SK-N-SH (cell line): ENCODE measurements at regions of chr13 and their contacts with region 1.

Region 1: DNA sequence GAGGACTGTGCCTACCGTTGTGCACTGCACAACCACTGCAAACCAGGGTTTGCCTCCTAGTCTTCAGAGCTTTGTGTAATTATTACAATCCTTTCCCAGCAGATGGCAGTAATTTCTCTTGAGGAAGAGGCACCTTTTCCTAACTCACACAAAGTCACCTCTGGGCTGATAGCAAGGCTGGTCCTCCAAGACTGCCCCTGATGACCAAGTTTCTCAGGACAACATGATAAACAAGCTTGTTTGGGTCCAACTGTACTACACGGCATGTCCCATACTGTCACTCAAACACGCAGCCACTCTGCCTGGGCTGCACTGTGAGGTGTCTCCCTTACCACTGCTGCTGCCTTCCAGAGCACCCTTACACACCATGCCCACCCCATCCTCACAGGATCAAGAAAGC is 39.3 kb downstream of the RFXAP start:
- DNase-seq: peak; percentile 53
- H3K4me3 ChIP-seq: no peak overlapping the region
- H3K27ac ChIP-seq: no peak overlapping the region
- H3K4me1 ChIP-seq: peaks cover 0 to 8% of the 10 kb centered on the region in 2 experiments; a peak in 1 of 4 replicates
- H3K27me3 ChIP-seq: no peaks in the 10 kb centered on the region
- CTCF ChIP-seq: peak; percentile 66
- EP300 ChIP-seq: no peak
- RAD21 ChIP-seq: peak; percentile 82

Region 2: GRCh38 chr13:35978603-35979316 is 879.5 kb before region 1 on chr13:
- CTCF ChIA-PET with region 1: no interaction called
- POLR2A ChIA-PET with region 1: no interaction called
- DNase-seq: peak; percentile 54
- H3K4me3 ChIP-seq: no peak overlapping the region
- H3K27ac ChIP-seq: peak overlapping the region in 1 of 2 experiments; percentile 80; a peak in 2 of 4 replicates
- H3K4me1 ChIP-seq: peaks cover 0 to 2% of the 10 kb centered on the region in 2 experiments; a peak in 1 of 4 replicates
- H3K27me3 ChIP-seq: no peaks in the 10 kb centered on the region
- CTCF ChIP-seq: peak; percentile 83
- EP300 ChIP-seq: no peak
- RAD21 ChIP-seq: peak; percentile 97

Region 3: DNA sequence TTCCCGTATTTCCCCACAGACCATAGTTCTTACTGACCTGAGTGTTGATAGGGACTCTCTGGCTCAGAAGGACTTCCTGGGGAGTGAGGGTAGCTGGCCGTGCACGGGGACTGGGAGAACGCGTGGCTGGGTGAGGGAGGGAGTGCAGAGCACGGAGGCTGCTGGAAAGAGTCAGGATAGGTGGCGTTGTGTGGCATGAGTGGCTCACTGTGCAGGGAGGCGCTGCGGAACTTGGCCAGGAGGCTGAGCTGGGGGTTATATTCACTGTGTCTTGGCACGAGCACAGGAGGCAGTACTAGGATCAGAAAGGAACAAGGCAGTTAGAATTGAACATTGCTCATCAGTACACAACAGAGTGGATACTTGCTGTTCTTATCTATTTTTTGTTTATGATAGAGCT is 14.3 kb after region 1 on chr13:
- CTCF ChIA-PET with region 1: interaction called, 31 read pairs
- POLR2A ChIA-PET with region 1: no interaction called
- DNase-seq: no peak
- H3K4me3 ChIP-seq: no peak overlapping the region
- H3K27ac ChIP-seq: no peak overlapping the region
- H3K4me1 ChIP-seq: peaks cover 7 to 9% of the 10 kb centered on the region in 2 experiments; a peak in 3 of 4 replicates
- H3K27me3 ChIP-seq: no peaks in the 10 kb centered on the region
- CTCF ChIP-seq: no peak
- EP300 ChIP-seq: no peak
- RAD21 ChIP-seq: no peak

Region 4: GRCh38 chr13:36973621-36974295 is 115.5 kb after region 1 on chr13:
- CTCF ChIA-PET with region 1: interaction called, 275 read pairs
- POLR2A ChIA-PET with region 1: no interaction called
- DNase-seq: no peak
- H3K4me3 ChIP-seq: no peak overlapping the region
- H3K27ac ChIP-seq: no peak overlapping the region
- H3K4me1 ChIP-seq: no peaks in the 10 kb centered on the region
- H3K27me3 ChIP-seq: no peaks in the 10 kb centered on the region
- CTCF ChIP-seq: no peak
- EP300 ChIP-seq: no peak
- RAD21 ChIP-seq: no peak

Region 5: GRCh38 chr13:36986462-36987240 is 128.4 kb after region 1 on chr13:
- CTCF ChIA-PET with region 1: interaction called, 275 read pairs
- POLR2A ChIA-PET with region 1: no interaction called
- DNase-seq: no peak
- H3K4me3 ChIP-seq: no peak overlapping the region
- H3K27ac ChIP-seq: 0 out of 4 replicates have a peak overlapping the region, but pooled peaks of 1 of the 2 experiments have one; percentile 1
- H3K4me1 ChIP-seq: no peaks in the 10 kb centered on the region
- H3K27me3 ChIP-seq: no peaks in the 10 kb centered on the region
- CTCF ChIP-seq: no peak
- EP300 ChIP-seq: no peak
- RAD21 ChIP-seq: no peak

Region 6: DNA sequence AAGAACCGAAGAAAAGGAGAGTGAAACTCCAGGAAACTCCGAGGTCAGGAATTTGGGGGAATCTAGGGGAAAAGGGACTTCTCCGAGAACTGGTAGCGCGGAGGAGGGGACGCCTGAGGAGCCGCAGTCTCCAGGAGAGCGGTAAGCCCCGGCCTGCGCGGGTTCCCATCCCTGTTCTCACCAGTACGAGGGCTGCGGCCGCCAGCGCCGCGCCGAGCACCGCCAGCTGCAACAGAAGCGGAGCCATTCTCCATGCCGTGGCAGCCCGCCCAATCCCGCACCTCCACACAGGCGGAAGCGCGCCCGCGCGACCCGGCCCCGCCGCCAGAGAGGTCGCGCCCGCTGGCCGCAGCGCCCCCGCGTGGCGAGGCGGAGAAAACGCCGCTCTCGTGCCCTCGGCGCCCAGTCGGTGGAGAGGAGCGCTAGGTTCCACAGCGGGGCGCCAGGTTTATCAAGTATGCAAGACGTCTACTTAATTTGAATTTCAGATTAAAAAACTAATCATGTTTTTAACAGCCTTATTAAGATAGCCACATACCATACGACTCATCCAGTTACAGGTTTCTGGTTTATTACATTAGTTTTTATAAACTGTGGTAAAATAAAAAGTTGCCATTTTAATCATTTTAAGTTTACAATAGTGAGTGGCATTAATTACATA is 140.9 kb after region 1 on chr13 and contains the start of gene ALG5:
- CTCF ChIA-PET with region 1: interaction called, 15 read pairs
- POLR2A ChIA-PET with region 1: no interaction called
- DNase-seq: peak; percentile 93
- H3K4me3 ChIP-seq: peak within 1 kb of the TSS; percentile 96 to 98
- H3K27ac ChIP-seq: peak within 1 kb of the TSS; percentile 91 to 98
- H3K4me1 ChIP-seq: peaks cover 9 to 13% of the 10 kb centered on the region in 2 experiments; a peak in 3 of 4 replicates
- H3K27me3 ChIP-seq: no peaks in the 10 kb centered on the region
- CTCF ChIP-seq: peak; percentile 95
- EP300 ChIP-seq: peak in 1 of 2 experiments; percentile 25; a peak in 1 of 4 replicates
- RAD21 ChIP-seq: peak; percentile 35; the same call in 1 of the 2 replicates
- polyA plus RNA-seq, gene ALG5: 24.2 and 30.4 TPM in 2 replicates